SK-N-SH (cell line): ENCODE measurements at regions of chr6 and their contacts with region 1.

Region 1: DNA sequence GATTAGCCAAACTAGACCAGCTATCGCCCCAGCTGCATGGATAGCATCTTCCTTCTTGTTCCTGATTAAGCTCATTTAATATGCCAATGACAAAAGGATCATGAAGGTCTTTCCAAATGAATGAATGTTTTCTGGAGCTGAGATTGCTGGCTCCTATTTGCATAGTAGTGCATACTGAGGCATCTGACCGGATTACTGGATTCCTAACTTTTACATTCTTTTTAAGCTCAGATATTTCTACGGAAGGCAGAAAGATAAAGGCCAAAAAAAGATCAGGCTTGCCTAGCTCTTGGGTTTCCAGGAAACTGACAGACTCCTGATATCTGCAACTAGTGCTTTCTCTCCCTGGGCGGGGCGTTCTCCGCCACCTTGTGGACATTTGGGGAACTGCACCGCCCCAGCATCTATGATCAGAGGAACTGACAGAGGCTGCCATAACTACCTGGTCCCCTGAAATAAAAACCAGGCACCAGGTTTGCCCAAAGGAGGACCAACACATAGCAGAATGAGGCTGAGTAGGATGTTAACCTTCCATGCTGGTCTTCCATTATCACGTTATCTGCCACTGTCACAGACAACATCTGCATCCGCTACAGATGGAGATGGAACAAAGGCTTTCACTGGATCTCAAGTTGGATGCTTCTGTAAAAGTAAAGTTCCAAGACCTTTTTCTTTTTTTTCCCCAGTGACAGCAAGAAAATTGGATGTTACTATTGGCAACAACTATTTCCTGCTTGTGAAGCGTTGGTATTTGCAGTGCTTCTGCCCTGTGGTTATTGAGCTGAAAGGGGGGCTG is 33.2 kb downstream of the NT5E start:
- DNase-seq: peak; percentile 64
- H3K4me3 ChIP-seq: no peak overlapping the region; a peak in 1 of 4 replicates
- H3K27ac ChIP-seq: peak overlapping the region; percentile 67 to 92
- H3K4me1 ChIP-seq: peaks cover 6 to 15% of the 10 kb centered on the region in 2 experiments; a peak in 3 of 4 replicates
- H3K27me3 ChIP-seq: no peaks in the 10 kb centered on the region
- CTCF ChIP-seq: peak; percentile 99
- EP300 ChIP-seq: no peak
- RAD21 ChIP-seq: peak; percentile 79

Region 2: DNA sequence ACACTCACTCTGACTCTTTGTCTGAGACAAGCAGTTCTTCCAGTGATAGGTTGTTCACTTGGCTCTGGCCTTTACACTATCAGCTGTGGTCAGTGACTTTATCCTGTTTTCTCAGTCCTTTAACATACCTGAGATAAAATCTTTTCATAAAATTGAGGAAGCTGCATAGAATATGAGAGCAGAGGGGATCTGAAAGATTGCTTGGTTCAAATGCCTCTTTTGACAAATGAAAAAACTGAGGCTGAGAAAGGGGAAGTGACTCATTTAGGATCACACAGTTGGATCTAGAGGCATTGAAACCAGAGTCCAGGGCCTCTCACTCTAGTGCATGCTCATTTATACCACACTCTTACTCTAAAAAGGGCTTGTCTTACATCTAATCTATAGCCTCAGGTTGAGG is 441.7 kb before region 1 on chr6:
- CTCF ChIA-PET with region 1: no interaction called
- POLR2A ChIA-PET with region 1: no interaction called
- DNase-seq: no peak
- H3K4me3 ChIP-seq: no peak overlapping the region
- H3K27ac ChIP-seq: no peak overlapping the region
- H3K4me1 ChIP-seq: no peaks in the 10 kb centered on the region
- H3K27me3 ChIP-seq: no peaks in the 10 kb centered on the region
- CTCF ChIP-seq: no peak
- EP300 ChIP-seq: no peak
- RAD21 ChIP-seq: no peak

Region 3: DNA sequence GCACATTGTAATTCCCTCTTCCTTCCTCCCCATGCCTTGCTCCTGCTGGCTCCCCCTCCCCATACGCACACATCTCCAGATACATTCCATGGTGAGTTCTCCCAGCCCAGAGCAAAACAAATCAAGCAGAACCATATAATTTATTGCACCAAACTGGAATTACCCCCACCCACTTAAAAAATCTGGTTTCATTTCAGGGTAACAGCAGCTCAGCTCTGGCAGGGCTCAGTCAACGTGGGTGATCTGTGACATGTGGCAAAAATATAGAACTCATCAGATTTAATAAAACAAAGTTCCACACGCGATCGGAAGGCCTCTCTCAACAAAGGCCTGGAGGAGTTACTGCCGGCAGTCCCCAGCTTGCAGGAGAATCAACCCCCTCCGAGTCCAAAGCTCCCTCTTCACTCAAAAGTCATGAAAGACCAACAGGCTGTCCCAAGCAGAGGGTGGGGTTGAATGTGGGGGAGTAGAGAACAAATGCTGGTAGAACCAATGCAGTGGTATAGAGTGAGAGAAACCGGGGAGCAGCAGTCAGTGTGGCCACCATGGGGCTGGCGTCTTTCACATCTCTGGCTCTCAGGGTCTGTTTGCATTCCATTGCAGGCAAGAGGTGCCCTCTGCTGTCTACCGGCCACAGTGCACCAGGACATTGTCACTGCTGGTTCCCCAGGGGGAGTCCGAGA is 356.5 kb before region 1 on chr6:
- CTCF ChIA-PET with region 1: no interaction called
- POLR2A ChIA-PET with region 1: no interaction called
- DNase-seq: peak; percentile 31
- H3K4me3 ChIP-seq: peak overlapping the region in 1 of 2 experiments; percentile 30; a peak in 1 of 4 replicates
- H3K27ac ChIP-seq: no peak overlapping the region
- H3K4me1 ChIP-seq: 0 out of 4 replicates have a peak, but pooled peaks cover 0 to 6% of the 10 kb centered on the region in 2 experiments
- H3K27me3 ChIP-seq: no peaks in the 10 kb centered on the region; the same call in 1 of the 2 replicates
- CTCF ChIP-seq: peak; percentile 58
- EP300 ChIP-seq: no peak
- RAD21 ChIP-seq: peak; percentile 63

Region 4: DNA sequence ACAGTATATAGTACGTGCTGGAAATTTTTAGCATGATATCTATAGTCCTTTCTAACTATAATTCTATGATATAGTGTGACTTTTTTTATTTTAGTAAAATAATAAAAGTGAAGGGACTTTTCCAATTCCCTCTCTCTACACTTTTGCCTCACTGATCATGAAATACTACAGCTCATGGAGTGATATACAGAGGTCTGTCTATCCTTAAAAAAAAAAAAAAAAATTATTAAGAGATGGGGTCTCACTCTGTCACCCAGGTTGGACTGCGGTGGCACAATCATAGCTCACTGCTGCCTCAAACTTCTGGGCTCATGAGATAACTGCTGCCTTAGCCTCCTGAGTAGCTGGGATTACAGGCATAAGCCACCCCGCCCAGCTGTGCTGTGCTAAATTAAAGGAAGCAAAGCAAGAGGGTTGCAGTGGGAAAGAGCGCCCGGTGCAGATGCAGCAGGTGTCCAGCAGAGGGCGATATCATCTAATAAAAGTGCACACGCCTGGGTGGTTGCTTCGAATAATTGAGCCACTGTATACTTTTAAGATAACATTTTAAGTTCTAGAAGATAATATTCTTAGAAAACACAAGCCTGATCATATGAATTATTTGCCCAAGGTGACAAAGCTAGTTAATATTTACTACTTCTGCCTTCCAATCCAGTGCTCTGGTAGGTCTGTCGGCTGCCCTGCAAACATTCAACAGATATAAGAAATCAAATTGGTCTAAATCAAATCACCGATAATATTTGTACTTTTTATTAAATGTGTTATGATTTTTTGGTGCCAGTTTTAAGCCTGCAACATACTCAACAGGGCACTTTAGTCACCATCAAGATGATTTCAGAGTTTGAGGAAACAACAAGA is 128.1 kb before region 1 on chr6:
- CTCF ChIA-PET with region 1: interaction called, 62 read pairs
- POLR2A ChIA-PET with region 1: no interaction called
- DNase-seq: peak; percentile 56
- H3K4me3 ChIP-seq: peak overlapping the region in 1 of 2 experiments; percentile 30; a peak in 1 of 4 replicates
- H3K27ac ChIP-seq: no peak overlapping the region
- H3K4me1 ChIP-seq: peaks cover 0 to 8% of the 10 kb centered on the region in 2 experiments; a peak in 3 of 4 replicates
- H3K27me3 ChIP-seq: no peaks in the 10 kb centered on the region
- CTCF ChIP-seq: peak; percentile 96
- EP300 ChIP-seq: no peak
- RAD21 ChIP-seq: peak; percentile 89

Region 5: GRCh38 chr6:85383042-85383441 is 100.1 kb before region 1 on chr6:
- CTCF ChIA-PET with region 1: interaction called, 10 read pairs
- POLR2A ChIA-PET with region 1: no interaction called
- DNase-seq: no peak
- H3K4me3 ChIP-seq: no peak overlapping the region
- H3K27ac ChIP-seq: no peak overlapping the region
- H3K4me1 ChIP-seq: no peaks in the 10 kb centered on the region; a peak in 1 of 4 replicates
- H3K27me3 ChIP-seq: no peaks in the 10 kb centered on the region
- CTCF ChIP-seq: no peak; the same call in 1 of the 2 replicates
- EP300 ChIP-seq: no peak
- RAD21 ChIP-seq: no peak

Region 6: GRCh38 chr6:85449818-85450759 is 33.0 kb before region 1 on chr6 and contains the start of gene NT5E:
- CTCF ChIA-PET with region 1: interaction called, 11 read pairs
- POLR2A ChIA-PET with region 1: no interaction called
- DNase-seq: peak; percentile 90
- H3K4me3 ChIP-seq: peak within 1 kb of the TSS; percentile 81 to 87
- H3K27ac ChIP-seq: peak within 1 kb of the TSS; percentile 80 to 100
- H3K4me1 ChIP-seq: peaks cover 5 to 6% of the 10 kb centered on the region in 2 experiments; a peak in 3 of 4 replicates
- H3K27me3 ChIP-seq: no peaks in the 10 kb centered on the region
- CTCF ChIP-seq: peak; percentile 27; the same call in 1 of the 2 replicates
- EP300 ChIP-seq: no peak
- RAD21 ChIP-seq: no peak
- polyA plus RNA-seq, gene NT5E: 443 and 528 TPM in 2 replicates

Region 7: DNA sequence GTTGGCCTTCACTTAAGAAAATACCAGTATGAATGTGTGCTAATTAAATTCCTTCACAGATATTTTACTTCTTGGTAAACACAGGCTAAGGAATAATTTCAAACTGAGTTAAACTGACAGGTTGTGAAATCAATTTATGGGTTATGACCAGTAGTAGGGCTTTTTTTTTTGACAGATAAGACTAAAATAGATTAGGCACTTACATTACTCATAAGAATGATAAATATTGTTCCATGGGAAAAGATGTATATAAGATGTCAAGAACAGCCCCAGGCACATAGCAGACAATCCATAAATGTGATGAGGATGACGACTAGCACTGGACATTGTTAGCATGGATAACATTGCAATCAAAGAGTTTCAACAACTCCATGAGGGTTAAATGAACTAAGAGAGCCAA is 10.4 kb before region 1 on chr6:
- CTCF ChIA-PET with region 1: interaction called, 30 read pairs
- POLR2A ChIA-PET with region 1: no interaction called
- DNase-seq: no peak
- H3K4me3 ChIP-seq: no peak overlapping the region
- H3K27ac ChIP-seq: peak overlapping the region; percentile 58 to 69; a peak in 3 of 4 replicates
- H3K4me1 ChIP-seq: peaks cover 0 to 43% of the 10 kb centered on the region in 2 experiments; a peak in 2 of 4 replicates
- H3K27me3 ChIP-seq: no peaks in the 10 kb centered on the region
- CTCF ChIP-seq: no peak
- EP300 ChIP-seq: no peak
- RAD21 ChIP-seq: no peak

Region 8: DNA sequence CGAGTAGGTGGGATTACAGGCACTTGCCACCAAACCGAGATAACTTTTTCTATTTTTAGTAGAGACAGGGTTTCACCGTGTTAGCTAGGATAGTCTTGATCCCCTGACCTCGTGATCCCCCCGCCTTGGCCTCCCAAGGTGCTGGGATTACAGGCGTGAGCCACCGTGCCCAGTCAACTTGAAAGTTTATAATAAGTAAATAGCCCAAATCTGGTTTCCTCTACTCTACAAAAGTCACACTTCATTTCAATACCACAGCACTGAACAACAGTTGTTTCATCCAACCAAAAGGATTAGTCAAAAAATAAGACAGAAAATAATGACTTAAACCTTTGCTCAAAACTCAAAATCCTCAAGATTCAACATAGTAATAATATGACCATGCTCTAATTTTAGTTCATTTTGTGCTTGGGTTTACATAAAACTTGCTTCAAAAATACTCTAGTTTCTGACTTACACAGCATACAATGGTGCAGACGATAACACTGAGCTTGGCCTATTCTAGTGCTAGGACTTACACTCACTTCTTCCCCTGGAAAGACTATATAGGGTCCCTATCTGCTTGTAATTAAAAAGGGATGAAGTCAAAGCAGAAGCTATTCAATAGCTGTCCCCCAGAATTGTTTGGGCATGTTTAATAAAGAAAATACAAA is 23.5 kb after region 1 on chr6:
- CTCF ChIA-PET with region 1: interaction called, 13 read pairs
- POLR2A ChIA-PET with region 1: no interaction called
- DNase-seq: no peak
- H3K4me3 ChIP-seq: no peak overlapping the region
- H3K27ac ChIP-seq: no peak overlapping the region
- H3K4me1 ChIP-seq: no peaks in the 10 kb centered on the region
- H3K27me3 ChIP-seq: no peaks in the 10 kb centered on the region
- CTCF ChIP-seq: no peak
- EP300 ChIP-seq: no peak
- RAD21 ChIP-seq: no peak

Region 9: GRCh38 chr6:85551264-85551663 is 68.2 kb after region 1 on chr6:
- CTCF ChIA-PET with region 1: no interaction called
- POLR2A ChIA-PET with region 1: no interaction called
- DNase-seq: peak; percentile 20
- H3K4me3 ChIP-seq: no peak overlapping the region
- H3K27ac ChIP-seq: no peak overlapping the region
- H3K4me1 ChIP-seq: no peaks in the 10 kb centered on the region
- H3K27me3 ChIP-seq: no peaks in the 10 kb centered on the region
- CTCF ChIP-seq: no peak
- EP300 ChIP-seq: no peak
- RAD21 ChIP-seq: no peak